ENCODE measurements at regions of chr3 and their contacts with region 1.

Region 1: DNA sequence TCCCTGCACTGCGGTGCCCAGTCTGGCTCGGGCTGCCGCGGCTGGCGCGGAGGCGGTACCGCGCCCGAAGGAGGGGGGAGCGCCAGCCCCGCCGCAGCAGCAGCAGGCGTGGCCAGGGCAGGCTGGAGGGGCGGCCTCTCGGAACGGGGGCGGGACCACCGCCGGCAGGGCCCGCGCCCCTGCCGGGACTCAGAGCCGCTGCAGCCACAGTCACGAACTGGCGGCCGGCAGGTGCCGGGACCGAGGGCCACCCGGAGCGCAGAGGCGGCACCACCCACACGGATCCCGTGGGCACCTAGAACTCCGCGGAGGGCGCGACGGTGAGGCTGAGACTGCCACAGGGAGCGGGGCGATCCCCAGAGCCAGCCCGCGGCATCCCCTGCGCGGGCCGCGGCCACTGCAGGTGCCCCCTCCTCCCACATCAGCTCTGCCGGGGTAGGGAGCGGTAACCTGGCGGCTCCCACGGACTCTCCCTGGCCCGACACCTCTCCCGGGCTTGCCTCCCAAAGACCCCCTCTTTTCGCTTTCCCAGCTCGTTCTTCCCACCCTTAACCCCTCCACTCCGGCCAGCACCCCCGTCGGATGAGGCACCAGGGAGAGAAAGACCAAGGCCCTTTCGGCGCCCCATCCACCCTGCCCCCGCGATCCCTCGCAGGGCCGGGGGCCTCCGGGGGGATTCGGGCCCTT is at the start of gene VWA5B2:
- DNase-seq: peak; percentile 65
- H3K4me3 ChIP-seq: peak within 1 kb of the TSS; percentile 11 to 54 (median 30)
- H3K27ac ChIP-seq: no peak within 1 kb of the TSS
- H3K4me1 ChIP-seq: peaks cover 9 to 23% (median 17%) of the 10 kb centered on the region in 4 donors
- H3K27me3 ChIP-seq: peaks cover 86% of the 10 kb centered on the region
- CTCF ChIP-seq: peak in 3 of 5 experiments; percentile 10 to 21 (median 17)
- EP300 ChIP-seq: no peak
- POLR2A ChIP-seq: no peak
- total RNA-seq, gene VWA5B2: 0.95 to 5.0 (median 1.4) TPM in 3 of 4 donors, not detected in the other

Region 2: GRCh38 chr3:183895296-183895695 is 334.2 kb before region 1 on chr3:
- in situ Hi-C with region 1: loop called in 3 of 4 experiments (anchors 25 kb)
- intact Hi-C with region 1: loop called (anchors 10 kb)
- DNase-seq: peak; percentile 31
- H3K4me3 ChIP-seq: no peak overlapping the region
- H3K27ac ChIP-seq: no peak overlapping the region
- H3K4me1 ChIP-seq: peaks cover 0 to 15% (median 9%) of the 10 kb centered on the region in 4 donors
- H3K27me3 ChIP-seq: peaks cover 7% of the 10 kb centered on the region
- CTCF ChIP-seq: peak; percentile 70 to 88 (median 83)
- EP300 ChIP-seq: no peak
- POLR2A ChIP-seq: no peak

Region 3: GRCh38 chr3:184145111-184145524 is 84.4 kb before region 1 on chr3:
- in situ Hi-C with region 1: loop called in 1 of 4 experiments (anchors 25 kb)
- intact Hi-C with region 1: loop called (anchors 10 kb)
- DNase-seq: peak; percentile 66
- H3K4me3 ChIP-seq: no peak overlapping the region
- H3K27ac ChIP-seq: peak overlapping the region in 1 of 4 donors; percentile 26
- H3K4me1 ChIP-seq: peaks cover 0 to 12% (median 0%) of the 10 kb centered on the region in 4 donors
- H3K27me3 ChIP-seq: no peaks in the 10 kb centered on the region
- CTCF ChIP-seq: peak; percentile 40 to 58 (median 48)
- EP300 ChIP-seq: no peak
- POLR2A ChIP-seq: no peak